Activated CD8-positive, alpha-beta memory T cell treated with anti-CD3 and anti-CD28 coated beads, Interleukin-2, amount 10 ng/mL, durations not matched to agents 7 days and 5 days (primary cell): ENCODE measurements at regions of chr19 and their contacts with region 1.

Region 1: DNA sequence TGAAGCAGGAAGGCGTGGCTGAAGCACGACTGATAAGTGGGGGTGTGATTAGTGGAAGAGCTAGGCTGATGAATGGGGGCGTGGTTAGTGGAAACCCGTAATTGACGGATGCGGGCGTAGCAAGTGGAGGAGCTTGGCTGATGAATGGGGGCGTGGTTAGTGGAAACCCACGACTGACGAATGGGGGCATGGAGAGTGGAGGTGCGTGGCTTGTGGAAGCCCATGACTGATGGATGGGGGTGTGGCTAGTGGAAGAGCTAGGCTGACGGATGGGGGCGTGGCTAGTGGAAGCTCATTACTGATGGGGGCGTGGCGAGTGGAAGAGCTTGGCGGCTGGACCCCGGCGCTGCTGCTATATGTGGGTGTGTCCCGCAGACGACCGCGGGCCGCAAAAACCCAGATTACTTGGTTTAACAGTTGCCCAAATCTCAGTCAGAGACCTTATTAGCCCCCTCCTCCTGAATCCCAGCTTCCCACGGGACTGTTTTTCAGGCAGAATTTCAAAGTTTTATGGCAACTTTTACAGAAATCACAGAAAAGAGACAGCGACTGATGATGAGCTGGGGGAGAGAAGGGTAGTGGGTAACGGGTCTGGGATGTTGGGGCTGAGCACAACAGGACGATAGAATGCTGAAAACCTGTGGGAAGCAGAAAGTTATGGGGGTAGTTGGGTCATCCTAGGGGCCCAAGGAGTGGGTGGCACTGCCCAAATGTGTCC is 9.0 kb upstream of the MEIS3 start:
- DNase-seq: peak; percentile 96
- ATAC-seq: peak; percentile 88
- H3K4me3 Mint-ChIP-seq: no peak overlapping the region
- H3K27ac Mint-ChIP-seq: no peak overlapping the region
- H3K4me1 Mint-ChIP-seq: peaks cover 33% of the 10 kb centered on the region
- H3K27me3 Mint-ChIP-seq: peaks cover 54% of the 10 kb centered on the region

Region 2: DNA sequence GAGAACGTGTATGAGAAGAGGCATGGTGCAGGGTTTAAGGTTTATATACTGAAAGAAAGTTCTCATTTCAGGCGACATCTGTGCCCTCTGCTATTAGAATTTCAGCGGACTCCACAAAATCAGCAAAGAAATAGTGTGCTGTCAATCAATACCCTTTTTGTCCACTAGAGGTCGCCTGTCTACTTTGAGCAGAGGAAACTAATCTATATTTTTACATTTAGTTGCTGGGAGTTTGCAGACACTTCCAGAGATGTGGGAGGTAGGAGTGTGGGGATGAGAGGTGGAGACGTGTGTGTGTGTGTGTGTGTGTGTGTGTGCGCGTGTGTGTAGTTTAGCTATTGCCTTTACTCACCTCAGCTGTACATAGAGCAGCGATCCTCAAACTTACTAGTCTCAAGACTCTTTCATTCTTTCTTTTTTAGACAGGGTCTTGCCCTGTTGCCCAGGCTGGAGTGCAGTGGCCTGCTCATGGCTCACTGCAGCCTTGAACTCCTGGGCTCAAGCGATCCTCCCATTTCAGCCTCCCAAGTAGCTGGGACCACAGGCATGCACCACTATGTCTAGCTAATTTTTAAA is 143.9 kb before region 1 on chr19:
- CTCF ChIA-PET with region 1: interaction called, 10 read pairs
- DNase-seq: no peak
- ATAC-seq: peak; percentile 27
- H3K4me3 Mint-ChIP-seq: no peak overlapping the region
- H3K27ac Mint-ChIP-seq: no peak overlapping the region
- H3K4me1 Mint-ChIP-seq: peaks cover 2% of the 10 kb centered on the region
- H3K27me3 Mint-ChIP-seq: no peaks in the 10 kb centered on the region

Region 3: DNA sequence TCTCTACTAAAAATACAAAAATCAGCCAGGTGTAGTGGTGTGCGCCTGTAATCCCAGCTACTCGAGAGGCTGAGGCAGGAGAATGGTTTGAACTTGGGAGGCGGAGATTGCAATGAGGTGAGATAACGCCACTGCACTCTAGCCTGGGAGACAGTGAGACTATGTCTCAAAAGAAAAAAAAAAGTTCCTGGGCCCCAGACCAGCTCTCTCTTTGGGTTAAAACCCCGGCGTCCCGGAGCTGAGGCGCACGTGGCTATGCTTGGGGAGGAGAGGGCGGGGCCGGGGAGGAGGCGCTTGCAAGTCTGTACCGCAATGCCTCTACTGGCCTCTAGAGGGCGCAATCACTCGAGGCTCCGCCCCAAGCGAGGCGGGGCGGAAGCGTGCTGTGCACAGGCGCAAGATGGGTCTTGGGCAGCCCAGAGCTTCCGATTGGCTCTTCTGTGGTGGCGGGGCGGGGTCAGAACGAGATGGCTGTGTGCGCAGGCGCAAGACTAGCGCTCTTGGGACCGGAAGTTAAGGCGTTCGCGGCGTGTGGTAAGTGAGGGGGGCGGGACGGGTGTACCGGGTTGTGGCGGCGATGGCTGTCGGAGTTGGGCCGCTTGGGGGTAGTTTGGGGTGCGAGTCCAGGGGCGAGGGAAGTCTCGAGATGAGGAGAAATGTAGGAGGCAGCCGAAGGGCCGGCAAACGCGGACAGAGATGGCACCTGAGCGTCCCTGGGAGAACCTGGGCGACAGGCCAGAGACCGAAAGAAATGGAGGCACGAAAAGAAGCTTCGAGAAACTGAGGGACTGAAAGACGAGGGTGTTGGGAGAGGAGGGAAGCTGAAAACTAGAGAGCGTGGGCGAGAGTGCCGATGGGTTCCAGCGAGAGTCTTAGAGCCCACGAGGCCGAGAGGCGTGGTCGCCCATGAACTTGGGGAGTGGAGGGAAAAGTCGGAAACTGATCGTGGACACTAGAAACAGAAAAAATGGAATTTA is 79.2 kb before region 1 on chr19 and contains the start of gene DHX34:
- CTCF ChIA-PET with region 1: interaction called, 23 read pairs
- DNase-seq: peak; percentile 99
- ATAC-seq: peak; percentile 99
- H3K4me3 Mint-ChIP-seq: peak within 1 kb of the TSS; percentile 94
- H3K27ac Mint-ChIP-seq: peak within 1 kb of the TSS; percentile 90
- H3K4me1 Mint-ChIP-seq: peaks cover 33% of the 10 kb centered on the region
- H3K27me3 Mint-ChIP-seq: no peaks in the 10 kb centered on the region
- total RNA-seq, gene DHX34: 11.7 to 14.3 TPM

Region 4: DNA sequence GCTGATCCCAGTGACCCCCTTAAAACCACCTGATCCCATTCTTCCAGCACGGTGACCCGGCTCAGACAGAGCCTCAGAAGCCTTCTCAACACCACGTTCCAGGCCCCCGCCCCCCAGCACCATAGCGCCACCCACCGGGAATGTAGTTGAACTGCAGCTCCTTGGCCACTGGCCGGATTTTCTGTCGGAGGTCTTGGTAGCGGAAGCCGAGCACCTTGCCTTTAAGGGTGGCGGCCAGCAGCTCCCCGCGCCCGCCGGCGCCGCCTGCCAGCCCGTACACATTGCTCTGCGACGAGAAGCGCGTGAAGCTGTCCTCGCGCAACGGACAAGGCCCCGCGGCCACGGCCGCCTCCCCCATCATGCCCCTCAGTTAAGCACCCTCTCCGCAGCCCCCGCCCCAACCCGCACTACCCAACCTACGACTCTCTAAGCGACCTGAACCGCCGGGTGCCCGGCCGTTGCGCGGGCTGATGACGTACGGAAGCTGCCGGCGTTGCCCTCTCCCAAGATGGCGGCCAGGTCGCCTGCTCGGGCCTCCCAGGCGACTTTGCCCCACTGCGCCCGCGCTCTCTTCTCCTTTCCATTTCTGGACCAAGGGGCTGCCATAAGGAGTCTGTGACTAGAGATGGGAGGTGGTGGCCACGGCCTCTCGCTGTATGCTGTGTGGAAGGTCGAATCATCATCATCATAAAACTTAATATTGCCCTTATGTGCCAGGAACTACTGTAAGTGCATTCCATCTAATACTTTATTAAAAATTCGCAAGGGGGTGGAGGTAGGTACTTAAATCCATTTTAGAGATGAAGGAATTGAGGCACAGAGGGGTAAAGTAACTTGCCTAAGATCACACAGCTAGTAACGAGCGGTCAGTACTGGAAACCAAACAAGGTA is 55.7 kb after region 1 on chr19 and contains the start of gene KPTN:
- CTCF ChIA-PET with region 1: interaction called, 62 read pairs
- DNase-seq: peak; percentile 95
- ATAC-seq: peak; percentile 92
- H3K4me3 Mint-ChIP-seq: peak within 1 kb of the TSS; percentile 87
- H3K27ac Mint-ChIP-seq: peak within 1 kb of the TSS; percentile 97
- H3K4me1 Mint-ChIP-seq: peaks cover 32% of the 10 kb centered on the region
- H3K27me3 Mint-ChIP-seq: peaks cover 2% of the 10 kb centered on the region
- total RNA-seq, gene KPTN: 11.0 to 13.3 TPM